T-cell (primary cell): ENCODE measurements at regions of chr20 and their contacts with region 1.

Region 1: DNA sequence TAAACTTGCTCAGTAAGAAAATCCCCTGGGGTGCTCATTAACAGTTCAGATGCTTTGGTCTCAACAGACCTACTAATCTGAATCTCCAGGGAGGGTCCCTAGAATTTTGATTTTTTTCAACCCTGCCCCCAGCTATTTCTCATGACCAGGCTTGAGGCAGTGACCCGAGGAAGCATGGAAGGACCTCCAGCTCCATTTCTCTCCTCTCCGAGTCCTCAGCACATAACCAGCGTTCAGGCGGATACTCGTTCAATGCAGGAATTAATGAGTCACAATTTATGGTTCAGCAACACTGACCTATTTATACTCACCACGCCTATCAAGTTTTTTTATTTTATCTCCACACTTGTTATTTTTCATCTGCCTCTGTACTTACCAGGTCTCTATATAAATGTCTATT is 369.2 kb upstream of the CDH4 start:
- DNase-seq: no peak
- ATAC-seq: no peak
- H3K4me3 ChIP-seq: no peak overlapping the region
- H3K4me3 Mint-ChIP-seq: no peak overlapping the region
- H3K27ac ChIP-seq: no peak overlapping the region
- H3K27ac Mint-ChIP-seq: no peak overlapping the region
- H3K4me1 ChIP-seq: no peaks in the 10 kb centered on the region
- H3K4me1 Mint-ChIP-seq: no peaks in the 10 kb centered on the region
- H3K27me3 ChIP-seq: peaks cover 0 to 4% of the 10 kb centered on the region in 2 experiments
- H3K27me3 Mint-ChIP-seq: peaks cover 0 to 10% of the 10 kb centered on the region in 2 donors

Region 2: DNA sequence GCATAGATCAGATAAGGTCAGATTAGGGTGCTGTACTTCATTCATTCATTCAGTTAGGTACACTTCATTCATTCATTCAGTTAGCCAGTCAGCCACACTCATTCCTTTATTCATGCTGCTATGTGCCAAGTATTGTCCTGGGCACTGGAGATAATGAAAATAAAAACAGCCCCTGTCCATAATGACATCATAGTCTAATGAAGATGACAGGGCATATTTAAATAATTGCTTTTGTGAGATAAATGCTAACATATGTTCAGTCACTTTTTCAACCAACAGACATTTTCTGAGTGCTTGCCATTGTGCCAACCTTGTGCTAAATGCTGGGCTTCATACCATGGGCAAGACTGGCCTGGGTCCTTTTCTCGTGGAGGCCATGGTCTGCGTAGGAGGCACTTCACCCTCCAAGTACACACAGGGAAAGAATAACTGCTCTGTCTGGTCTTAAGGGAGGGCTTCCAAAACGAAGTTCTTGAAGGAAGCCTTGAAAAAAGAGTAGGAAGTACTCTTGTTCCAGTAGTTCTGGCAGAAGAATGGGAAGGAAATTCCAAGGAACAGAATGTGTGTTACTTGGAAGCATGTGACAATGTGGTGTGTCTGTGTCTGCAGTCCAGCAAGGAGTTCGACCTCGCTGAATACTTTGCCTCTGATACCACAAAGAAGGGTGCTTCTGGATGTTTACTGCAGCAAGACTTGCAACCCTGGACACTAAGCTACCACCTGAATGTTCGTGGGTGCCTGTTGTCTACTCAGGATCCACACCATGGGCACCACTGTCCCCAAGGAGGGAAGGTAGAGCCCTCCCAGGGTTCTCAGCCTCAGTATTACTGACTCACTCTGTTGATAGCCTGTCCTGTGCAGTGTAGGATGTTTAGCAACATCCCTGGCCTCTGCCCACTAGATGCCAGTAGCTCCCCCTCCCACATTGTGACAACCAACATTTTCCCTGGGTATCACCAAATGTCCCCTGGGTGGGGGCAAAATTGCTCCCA is 102.5 kb before region 1 on chr20:
- CTCF ChIA-PET with region 1: no interaction called
- POLR2A ChIA-PET with region 1: interaction called in 1 of 2 experiments, 10 read pairs
- DNase-seq: no peak
- ATAC-seq: no peak
- H3K4me3 ChIP-seq: no peak overlapping the region
- H3K4me3 Mint-ChIP-seq: no peak overlapping the region
- H3K27ac ChIP-seq: no peak overlapping the region
- H3K27ac Mint-ChIP-seq: no peak overlapping the region
- H3K4me1 ChIP-seq: no peaks in the 10 kb centered on the region
- H3K4me1 Mint-ChIP-seq: no peaks in the 10 kb centered on the region
- H3K27me3 ChIP-seq: no peaks in the 10 kb centered on the region
- H3K27me3 Mint-ChIP-seq: no peaks in the 10 kb centered on the region